HEK293 (cell line): ENCODE measurements at regions of chr14 and their contacts with region 1.

Region 1: GRCh38 chr14:95442633-95443021 is 73.8 kb downstream of the SYNE3 start:
- H3K4me3 ChIP-seq: no peak overlapping the region
- H3K27ac ChIP-seq: no peak overlapping the region
- H3K4me1 ChIP-seq: no peaks in the 10 kb centered on the region
- CTCF ChIP-seq: peak; percentile 69

Region 2: GRCh38 chr14:95431199-95432143 is 11.2 kb before region 1 on chr14:
- CTCF ChIA-PET with region 1: interaction called, 26 read pairs
- POLR2A ChIA-PET with region 1: no interaction called
- H3K4me3 ChIP-seq: no peak overlapping the region
- H3K27ac ChIP-seq: no peak overlapping the region
- H3K4me1 ChIP-seq: no peaks in the 10 kb centered on the region
- CTCF ChIP-seq: peak; percentile 35; the same call in 1 of the 2 replicates

Region 3: DNA sequence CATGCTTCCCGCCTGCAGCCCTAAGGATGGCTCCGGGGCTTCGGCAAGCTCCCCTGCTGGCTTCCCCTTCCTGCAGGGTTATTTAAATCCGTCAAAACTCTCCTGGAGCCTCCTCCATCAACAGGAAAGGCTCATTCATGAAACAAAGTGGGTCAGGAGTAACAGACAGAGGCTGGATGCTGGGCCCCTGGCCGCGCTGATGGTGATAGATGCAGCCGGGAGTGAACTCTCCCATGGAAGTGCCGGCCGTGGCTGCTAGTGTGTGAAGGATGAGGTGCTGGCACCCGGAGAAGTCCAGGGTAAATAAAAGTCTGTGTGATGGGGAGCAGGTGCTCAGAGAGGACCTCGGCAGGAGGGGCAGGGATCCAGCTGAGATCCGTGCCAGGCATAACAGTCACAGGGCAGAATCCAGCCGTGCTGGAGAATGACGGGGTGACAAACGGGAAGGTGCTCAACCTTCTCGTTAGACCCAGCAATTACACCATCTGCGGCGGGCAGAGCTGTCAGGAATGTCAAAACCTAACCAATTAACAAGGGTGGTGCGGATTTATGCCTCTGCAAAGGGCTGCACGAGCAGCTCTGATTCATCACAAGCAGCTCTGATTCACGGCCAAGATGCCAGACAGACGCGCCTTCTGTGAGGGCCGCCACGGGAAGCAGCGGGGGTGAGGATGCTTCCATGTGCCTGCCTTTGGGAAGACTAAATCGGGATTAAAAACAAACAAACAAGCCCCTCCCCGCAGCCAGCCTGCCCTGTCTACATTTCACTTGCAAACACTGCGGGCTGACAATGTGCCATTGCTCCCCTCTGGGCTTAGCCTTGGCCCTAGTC is 18.2 kb after region 1 on chr14:
- CTCF ChIA-PET with region 1: interaction called, 26 read pairs
- POLR2A ChIA-PET with region 1: no interaction called
- H3K4me3 ChIP-seq: no peak overlapping the region
- H3K27ac ChIP-seq: no peak overlapping the region
- H3K4me1 ChIP-seq: peaks cover 8% of the 10 kb centered on the region; the same call in 1 of the 2 replicates
- CTCF ChIP-seq: no peak

Region 4: DNA sequence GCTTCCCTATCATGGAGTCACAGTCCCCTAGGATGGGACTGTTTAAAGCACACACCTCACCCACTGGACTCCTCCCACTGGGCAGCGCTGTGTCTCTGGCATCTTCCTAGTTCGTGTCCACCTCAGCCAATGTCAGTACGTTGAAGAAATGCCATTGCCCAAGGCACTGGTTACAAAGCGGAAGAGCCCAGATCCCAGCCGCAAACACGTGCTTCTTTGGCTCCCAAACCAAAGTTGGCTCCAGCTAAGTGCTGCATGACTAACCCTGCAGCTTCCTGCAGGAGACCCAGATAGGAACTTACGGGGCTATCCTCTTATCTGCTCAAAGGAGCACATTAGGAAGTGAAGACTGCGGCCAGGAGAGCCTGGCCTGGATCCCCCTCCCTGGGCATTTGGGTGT is 64.5 kb after region 1 on chr14:
- CTCF ChIA-PET with region 1: no interaction called
- POLR2A ChIA-PET with region 1: no interaction called
- H3K4me3 ChIP-seq: no peak overlapping the region
- H3K27ac ChIP-seq: no peak overlapping the region
- H3K4me1 ChIP-seq: no peaks in the 10 kb centered on the region
- CTCF ChIP-seq: no peak

Region 5: GRCh38 chr14:95561001-95561412 is 118.4 kb after region 1 on chr14:
- CTCF ChIA-PET with region 1: interaction called, 10 read pairs
- POLR2A ChIA-PET with region 1: no interaction called
- H3K4me3 ChIP-seq: no peak overlapping the region
- H3K27ac ChIP-seq: no peak overlapping the region
- H3K4me1 ChIP-seq: no peaks in the 10 kb centered on the region
- CTCF ChIP-seq: peak; percentile 96

Region 6: DNA sequence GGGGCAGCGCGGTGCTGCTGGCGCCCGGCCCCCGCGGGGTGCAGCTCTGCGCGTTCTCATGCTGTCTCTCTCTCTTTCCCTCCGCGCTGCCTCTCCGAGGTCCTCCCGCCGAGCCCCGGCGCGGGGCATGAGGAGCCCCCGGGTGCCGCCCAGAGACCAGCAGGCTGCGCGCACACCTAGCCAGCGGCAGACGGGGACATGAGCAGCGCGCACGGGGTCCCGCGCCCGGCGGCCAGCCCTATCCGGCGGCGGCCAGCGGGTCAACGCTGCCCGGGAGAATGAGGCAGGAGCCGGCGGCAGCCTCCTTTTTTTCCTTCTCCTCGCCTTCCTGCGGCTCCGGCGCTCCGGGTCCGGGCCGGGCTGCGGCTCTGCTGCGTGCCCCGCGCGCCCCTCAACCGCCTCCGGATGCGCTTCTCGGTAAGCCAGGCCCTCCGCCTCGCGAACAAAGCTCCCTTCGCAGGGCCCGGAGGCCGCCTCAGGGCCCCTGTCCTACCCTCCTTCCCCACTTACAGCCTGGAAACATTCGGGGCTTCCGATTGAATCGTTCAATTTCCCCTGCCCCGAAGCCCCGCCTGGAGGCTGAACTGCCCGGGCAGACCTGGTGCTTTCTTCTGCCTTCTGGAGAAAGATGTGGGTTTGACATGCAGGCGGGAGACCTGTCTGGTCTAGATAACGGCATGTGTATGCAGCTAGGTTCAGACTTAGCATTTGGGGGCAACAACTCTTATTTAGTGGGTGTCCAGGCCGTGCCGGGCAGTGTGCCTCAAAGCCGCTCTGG is 434.3 kb after region 1 on chr14 and contains the start of gene TUNAR:
- CTCF ChIA-PET with region 1: no interaction called
- POLR2A ChIA-PET with region 1: no interaction called
- H3K4me3 ChIP-seq: peak within 1 kb of the TSS; percentile 37
- H3K27ac ChIP-seq: peak within 1 kb of the TSS; percentile 37; the same call in 1 of the 2 replicates
- H3K4me1 ChIP-seq: no peaks in the 10 kb centered on the region
- CTCF ChIP-seq: peak; percentile 46; the same call in 1 of the 2 replicates